PC-3 (cell line): ENCODE measurements at regions of chr15 and their contacts with region 1.

Region 1: GRCh38 chr15:58677426-58677825 is 72.1 kb downstream of the ADAM10 start:
- DNase-seq: no peak
- ATAC-seq: no peak
- H3K4me3 ChIP-seq: no peak overlapping the region
- H3K27ac ChIP-seq: no peak overlapping the region
- H3K4me1 ChIP-seq: no peaks in the 10 kb centered on the region
- H3K27me3 ChIP-seq: no peaks in the 10 kb centered on the region
- CTCF ChIP-seq: no peak

Region 2: DNA sequence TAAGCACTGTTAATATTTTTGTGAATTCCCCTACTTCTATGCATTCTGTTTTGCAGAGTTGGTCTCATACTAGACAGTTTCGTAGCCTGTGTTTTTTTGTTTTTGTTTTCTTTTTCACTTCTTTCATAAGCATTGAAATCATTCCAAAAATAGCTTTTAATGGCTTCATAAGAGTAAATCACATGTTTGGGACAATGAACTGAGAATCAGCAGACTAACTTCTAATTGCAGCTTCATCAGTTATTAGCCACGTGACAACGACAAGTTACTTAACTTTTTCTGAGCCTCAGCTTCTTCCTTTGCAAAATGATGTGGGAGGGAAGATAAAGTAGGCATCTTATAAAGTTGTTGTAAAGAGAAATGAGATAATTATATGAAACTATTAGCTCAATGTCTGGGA is 120.9 kb before region 1 on chr15:
- CTCF ChIA-PET with region 1: no interaction called
- POLR2A ChIA-PET with region 1: interaction called, 14 read pairs
- intact Hi-C with region 1: no loop called
- DNase-seq: no peak
- ATAC-seq: no peak
- H3K4me3 ChIP-seq: no peak overlapping the region
- H3K27ac ChIP-seq: no peak overlapping the region
- H3K4me1 ChIP-seq: peaks cover 10% of the 10 kb centered on the region
- H3K27me3 ChIP-seq: no peaks in the 10 kb centered on the region
- CTCF ChIP-seq: no peak

Region 3: DNA sequence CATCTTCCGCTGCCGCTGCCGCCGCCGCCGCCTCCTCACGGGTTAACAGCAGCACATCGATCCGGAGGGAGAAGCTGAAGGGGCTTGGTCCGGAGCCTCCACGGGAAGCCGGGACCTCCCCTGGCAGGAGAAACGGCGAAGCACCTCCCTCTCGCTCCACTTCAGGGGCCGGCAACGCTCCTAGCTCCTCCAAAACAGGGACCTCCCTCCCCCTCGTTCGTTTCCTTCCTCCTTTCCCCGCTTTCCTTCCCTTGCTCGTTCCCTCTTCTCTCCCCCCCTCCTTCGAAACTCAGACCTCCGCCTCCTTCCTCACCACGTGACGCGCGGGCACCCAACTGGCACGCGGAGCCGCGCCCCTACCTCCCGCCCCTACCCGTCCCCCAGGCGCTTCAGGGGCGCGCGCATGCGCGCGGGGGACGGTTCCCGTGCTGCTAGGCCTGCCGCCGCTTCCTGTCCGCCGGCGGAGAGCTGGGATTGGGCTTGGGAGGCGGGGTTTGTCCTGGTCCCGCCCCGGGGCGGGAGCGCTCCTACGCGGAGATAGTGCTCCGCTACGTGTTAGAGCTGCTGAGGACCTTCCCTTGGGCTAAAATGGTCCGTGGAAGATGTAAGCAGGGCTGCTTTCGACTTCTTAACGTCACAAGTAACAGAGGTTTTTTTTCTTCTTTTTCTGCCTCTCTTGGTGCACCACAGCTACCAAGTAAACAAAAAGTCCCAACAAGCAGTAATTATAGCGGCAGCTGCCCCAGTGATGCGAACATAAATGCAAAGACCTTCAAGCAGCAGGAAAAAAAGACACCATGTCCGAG is 72.3 kb after region 1 on chr15 and contains the start of gene ADAM10:
- CTCF ChIA-PET with region 1: no interaction called
- POLR2A ChIA-PET with region 1: no interaction called
- intact Hi-C with region 1: loop called (anchors 10 kb)
- DNase-seq: peak; percentile 98
- ATAC-seq: peak; percentile 93
- H3K4me3 ChIP-seq: peak within 1 kb of the TSS; percentile 80
- H3K27ac ChIP-seq: peak within 1 kb of the TSS; percentile 74
- H3K4me1 ChIP-seq: 0 out of 2 replicates have a peak, but pooled peaks cover 3% of the 10 kb centered on the region
- H3K27me3 ChIP-seq: no peaks in the 10 kb centered on the region
- CTCF ChIP-seq: no peak
- total RNA-seq, gene ADAM10: 91.3 and 96.8 TPM in 2 replicates